GM10248 (cell line): ENCODE measurements at regions of chr1 and their contacts with region 1.

Region 1: DNA sequence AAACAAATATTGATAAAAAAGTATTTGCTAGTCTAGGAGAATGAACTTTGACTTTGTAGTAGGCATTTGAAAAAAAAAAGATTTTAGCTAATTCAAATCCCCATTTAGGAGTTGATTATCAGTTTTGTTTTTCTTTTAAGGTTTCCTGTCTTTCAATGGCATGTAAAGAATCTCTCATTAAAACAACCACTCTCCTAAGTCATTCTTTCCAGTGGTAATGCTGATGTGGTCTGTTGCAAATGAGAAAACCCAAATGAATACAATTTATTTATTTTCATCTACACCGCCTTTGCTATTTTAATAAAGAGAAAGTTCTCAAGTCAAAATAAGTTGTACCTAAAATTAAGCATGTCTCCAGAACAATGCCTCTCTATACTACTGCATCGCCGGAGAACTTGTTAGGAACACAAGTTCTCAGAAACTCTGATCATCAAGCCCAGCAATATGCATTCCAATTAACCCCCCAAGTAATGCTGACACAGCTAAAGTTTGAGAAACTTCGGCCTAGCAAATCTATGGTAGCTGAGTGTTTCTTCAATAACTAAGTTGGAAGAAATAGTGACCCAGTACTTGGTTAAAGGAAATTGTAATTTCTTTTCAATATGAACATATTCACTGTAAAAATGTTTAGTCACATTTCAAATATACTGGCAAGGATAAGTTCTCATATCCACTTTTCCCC is 255.1 kb downstream of the PTPRC start:
- DNase-seq: no peak
- CTCF ChIP-seq: no peak

Region 2: GRCh38 chr1:198904321-198904720 is 10.4 kb after region 1 on chr1:
- CTCF ChIA-PET with region 1: interaction called, 12 read pairs
- POLR2A ChIA-PET with region 1: no interaction called
- DNase-seq: no peak
- CTCF ChIP-seq: no peak

Region 3: DNA sequence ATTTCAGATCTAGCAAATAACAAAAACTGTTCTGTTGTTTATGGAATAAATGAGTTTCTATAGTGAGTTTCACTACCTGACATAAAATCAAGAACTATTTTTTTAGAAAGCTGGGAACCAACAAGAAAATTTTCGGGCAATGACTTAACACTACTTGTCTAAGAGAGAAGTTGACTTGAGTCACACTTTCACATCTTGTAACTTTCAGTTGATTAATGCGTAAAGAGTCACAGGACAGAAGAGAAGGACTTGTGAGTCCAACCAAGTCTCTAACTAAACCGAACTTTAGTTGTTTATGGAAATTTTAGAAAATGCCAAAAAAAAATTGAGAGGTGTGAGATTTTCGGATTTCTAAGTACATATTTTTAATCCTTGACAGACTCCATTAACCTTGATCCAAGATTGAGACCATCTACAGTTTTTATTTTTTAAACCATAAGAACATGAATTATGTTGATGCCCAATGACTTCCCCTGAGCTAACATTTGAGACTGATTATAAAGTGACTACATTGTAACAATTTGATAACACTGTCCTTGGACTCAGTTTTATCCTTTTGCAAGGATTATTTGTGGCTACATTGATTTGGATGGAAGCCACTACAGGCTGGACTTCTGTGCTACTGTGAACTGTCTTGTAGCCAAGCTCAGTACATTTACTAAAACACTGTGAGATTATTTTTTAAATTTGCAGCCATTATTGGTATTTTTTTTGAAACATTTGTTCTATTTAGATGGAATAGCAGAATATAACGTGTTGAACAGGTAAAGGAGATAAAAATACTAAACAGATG is 28.9 kb after region 1 on chr1:
- CTCF ChIA-PET with region 1: no interaction called
- POLR2A ChIA-PET with region 1: no interaction called
- DNase-seq: no peak
- CTCF ChIP-seq: no peak